Right ventricle myocardium inferior (tissue), 1 donor: ENCODE measurements at regions of chr18 and their contacts with region 1.

Region 1: GRCh38 chr18:21600526-21601410 is at the start of gene ESCO1:
- DNase-seq: peak; percentile 98
- ATAC-seq: peak; percentile 91
- total RNA-seq, gene ESCO1: 9.6 TPM

Region 2: GRCh38 chr18:21509062-21509461 is 91.7 kb before region 1 on chr18:
- intact Hi-C with region 1: no loop called
- DNase-seq: no peak
- ATAC-seq: no peak

Region 3: DNA sequence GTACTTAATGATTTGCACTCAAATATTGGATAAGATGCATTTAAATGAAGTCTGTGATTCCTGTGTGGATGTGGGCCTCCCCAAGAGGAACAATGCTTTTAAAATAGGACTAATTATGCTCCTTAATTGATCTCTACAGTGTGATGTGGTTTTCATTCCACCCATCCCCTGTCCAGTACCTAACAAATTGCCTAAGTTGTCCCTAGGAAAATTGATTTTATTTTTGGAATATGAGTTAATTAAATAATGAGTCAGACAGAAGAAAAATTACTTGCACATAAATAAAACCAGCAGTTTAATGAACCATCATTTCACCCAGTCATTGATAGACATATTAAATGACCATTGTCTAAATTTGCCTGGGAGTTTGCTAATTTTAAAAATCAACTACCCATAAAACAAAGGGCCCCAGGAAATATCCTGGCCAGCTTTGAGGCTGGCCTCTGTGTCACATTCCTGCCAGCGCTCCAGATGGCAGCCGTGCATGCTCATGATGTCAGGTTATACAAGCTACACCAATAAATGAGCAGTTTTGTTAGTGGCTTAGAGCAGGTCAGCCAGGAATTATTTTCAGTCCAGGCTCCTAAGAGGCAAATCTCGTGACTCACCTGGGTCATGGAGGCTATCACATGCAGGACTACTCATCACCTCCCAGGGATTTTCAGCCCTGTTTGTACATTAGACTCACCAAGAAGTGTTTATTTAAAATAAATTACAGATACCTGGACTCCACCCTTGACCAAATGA is 71.9 kb after region 1 on chr18:
- intact Hi-C with region 1: no loop called
- DNase-seq: no peak
- ATAC-seq: peak; percentile 82

Region 4: DNA sequence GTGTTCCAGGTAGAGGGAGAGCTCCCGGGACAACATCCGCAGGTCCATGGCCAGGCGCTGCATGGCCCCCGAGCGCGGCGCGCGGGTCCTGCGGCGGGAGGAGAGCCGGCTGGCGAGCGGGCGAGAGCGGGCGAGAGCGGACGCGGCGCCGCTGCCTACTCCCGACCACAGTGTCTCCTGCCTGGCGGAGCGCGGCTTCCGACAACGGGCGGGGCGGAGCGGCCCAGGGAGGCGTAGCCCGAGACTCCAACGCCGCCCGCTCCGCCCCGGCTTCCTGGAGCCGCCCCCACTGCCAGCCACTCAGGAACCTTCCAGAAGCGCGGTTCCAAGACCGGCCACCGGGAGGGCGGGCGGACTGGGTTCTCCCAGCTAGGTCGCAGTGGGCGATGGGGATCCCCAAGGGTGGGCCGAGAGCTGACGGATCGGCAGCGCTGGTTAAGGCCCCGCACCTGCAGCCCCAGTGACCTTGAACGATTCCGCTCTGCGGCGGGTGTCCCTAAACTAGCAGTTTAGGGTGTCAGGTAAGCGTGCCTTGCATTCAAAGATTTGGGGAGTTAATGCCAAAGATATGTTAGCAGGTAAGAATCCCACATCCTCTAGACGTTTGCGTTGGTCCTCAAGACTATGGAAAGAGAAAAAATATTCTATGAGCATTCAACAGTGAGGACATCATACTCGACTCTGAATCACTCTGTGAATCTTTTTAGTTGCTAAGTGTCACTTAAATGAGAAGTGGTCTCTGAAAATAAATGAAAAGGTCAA is 104.0 kb after region 1 on chr18 and contains the start of gene ABHD3:
- intact Hi-C with region 1: loop called (anchors 5 kb)
- DNase-seq: peak; percentile 97
- ATAC-seq: peak; percentile 100
- total RNA-seq, gene ABHD3: 5.4 TPM

Region 5: GRCh38 chr18:21740724-21741510 is 140.1 kb after region 1 on chr18 and contains the start of gene MIB1:
- intact Hi-C with region 1: loop called (anchors 2 kb)
- DNase-seq: peak; percentile 76
- ATAC-seq: peak; percentile 87
- total RNA-seq, gene MIB1: 17.3 TPM

Region 6: DNA sequence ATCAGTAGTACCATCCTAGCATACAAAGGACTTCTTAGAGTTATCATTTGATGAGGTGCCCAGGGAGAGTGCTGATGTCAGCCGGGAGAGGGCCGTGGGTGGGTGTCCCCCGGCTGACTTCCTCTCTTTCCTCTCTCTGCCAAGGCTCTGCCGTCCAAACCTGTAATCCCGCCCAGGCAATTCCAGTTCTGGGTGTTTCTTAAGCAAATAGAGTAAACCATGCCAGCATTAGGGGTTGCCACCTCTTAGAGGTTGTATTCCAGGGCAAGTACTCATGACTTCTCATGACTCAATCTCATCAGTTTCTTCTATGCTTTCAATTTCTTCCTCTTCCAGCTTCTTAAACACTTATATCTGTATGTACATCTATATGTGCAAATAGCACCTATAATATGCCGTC is 685.9 kb after region 1 on chr18:
- intact Hi-C with region 1: no loop called
- DNase-seq: no peak
- ATAC-seq: peak; percentile 62